HAP-1 (cell line): ENCODE measurements at regions of chr1 and their contacts with region 1.

Region 1: GRCh38 chr1:180173952-180174351 is 19.3 kb downstream of the QSOX1 start:
- DNase-seq: no peak
- H3K4me3 ChIP-seq: no peak overlapping the region
- H3K4me1 ChIP-seq: no peaks in the 10 kb centered on the region
- H3K27me3 ChIP-seq: no peaks in the 10 kb centered on the region

Region 2: DNA sequence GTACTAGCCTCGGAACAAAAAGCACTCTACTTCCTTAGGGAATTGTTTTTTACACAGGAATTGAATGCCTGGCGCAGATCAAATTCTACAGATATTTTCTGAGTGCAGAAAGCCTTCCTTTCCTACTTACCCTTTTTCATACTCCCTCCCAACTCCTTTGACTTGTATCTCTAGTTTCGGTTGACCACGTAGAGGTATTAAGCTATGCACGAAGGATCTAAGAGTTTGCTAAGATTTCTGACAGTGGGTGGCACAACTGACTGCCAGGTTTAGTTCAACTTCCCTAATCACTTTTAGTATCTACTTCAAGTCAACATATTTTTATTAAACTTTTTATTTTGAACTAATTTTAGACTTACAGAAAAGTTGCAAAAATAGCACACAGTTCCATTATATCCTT is 301.4 kb before region 1 on chr1:
- in situ Hi-C with region 1: loop called (anchors 5 kb)
- DNase-seq: no peak
- H3K4me3 ChIP-seq: no peak overlapping the region
- H3K4me1 ChIP-seq: peaks cover 6% of the 10 kb centered on the region; the same call in 1 of the 2 replicates
- H3K27me3 ChIP-seq: no peaks in the 10 kb centered on the region

Region 3: DNA sequence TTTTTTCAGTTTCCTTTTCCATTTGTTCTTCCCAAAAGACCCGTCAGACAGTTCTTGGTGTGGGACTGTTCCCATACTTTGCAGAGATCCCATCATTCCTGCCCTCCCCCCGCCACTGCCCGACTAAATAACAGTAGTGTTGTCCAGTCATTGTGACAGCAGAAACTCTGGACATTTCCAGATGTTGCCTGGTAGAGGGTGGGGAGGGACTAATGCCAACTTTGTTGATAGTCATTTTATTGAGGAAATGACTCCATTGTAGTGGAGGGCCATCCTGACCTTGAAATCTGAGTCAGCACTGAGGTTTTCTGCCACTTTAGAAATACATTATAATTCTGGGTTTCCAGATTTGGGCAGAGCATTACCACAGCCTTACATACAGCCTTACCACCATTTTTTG is 133.9 kb before region 1 on chr1:
- in situ Hi-C with region 1: no loop called
- DNase-seq: no peak
- H3K4me3 ChIP-seq: no peak overlapping the region
- H3K4me1 ChIP-seq: peaks cover 11% of the 10 kb centered on the region
- H3K27me3 ChIP-seq: no peaks in the 10 kb centered on the region